ENCODE measurements at regions of chr11 and their contacts with region 1.

Region 1: GRCh38 chr11:62787005-62787759 is at the start of gene TMEM179B:
- DNase-seq: peak; percentile 88
- ATAC-seq: peak; percentile 80
- H3K4me3 ChIP-seq: peak within 1 kb of the TSS; percentile 95
- H3K27ac ChIP-seq: peak within 1 kb of the TSS; percentile 64
- H3K4me1 ChIP-seq: peaks cover 7% of the 10 kb centered on the region
- H3K27me3 ChIP-seq: no peaks in the 10 kb centered on the region
- CTCF ChIP-seq: peak; percentile 65 to 75 (median 74)
- EP300 ChIP-seq: no peak
- POLR2A ChIP-seq: peak; percentile 99
- RAD21 ChIP-seq: peak; percentile 58
- polyA plus RNA-seq, gene TMEM179B: 57.8 to 62.8 TPM

Region 2: DNA sequence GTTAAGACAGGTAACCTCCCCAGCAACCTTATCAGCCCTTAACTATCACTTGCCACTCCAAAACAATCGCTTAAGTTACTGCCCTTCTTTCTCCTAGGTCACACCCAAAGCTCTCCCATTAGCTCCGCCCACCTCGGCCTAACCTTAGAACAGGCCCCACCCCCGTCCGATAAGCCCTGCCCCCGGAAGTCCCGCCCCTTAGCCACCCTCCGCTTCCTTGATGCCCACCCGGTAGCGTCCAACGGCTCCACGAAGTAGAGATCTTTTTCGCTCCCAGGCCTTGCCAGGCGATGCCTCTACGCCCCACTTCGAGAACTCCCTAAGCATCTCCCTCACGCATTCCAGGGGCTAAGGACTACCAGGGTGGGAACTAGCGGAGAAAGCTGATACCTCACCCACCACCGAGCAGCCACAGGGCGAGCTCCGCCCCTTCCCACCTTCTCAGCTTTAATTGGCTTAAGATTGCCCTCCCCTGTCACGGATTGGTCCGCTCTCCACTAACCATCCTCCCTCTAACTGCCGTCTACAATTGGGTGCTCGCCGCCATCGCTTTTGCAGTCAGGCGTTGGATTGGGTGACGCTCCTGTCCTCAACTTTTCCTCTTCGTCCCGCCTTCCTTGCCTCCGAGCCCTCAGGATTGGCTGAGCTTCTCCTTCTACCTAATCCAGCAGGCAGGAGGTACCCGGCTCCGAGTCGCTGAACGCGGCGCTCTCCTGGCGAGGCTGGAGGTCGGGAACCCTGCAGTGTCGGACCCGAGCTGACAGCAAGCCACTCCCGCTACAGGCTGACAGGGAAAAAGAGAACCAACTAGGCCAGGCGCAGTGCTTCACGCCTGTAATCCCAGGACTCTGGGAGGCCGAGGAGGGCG is 33.2 kb before region 1 on chr11 and contains the start of gene ZBTB3:
- CTCF ChIA-PET with region 1: interaction called, 12 read pairs
- POLR2A ChIA-PET with region 1: interaction called, 21 read pairs
- RAD21 ChIA-PET with region 1: interaction called, 8 read pairs
- SMC1A ChIA-PET with region 1: interaction called, 13 read pairs
- in situ Hi-C with region 1: no loop called
- intact Hi-C with region 1: no loop called
- DNase-seq: peak; percentile 99
- ATAC-seq: peak; percentile 99
- H3K4me3 ChIP-seq: peak within 1 kb of the TSS; percentile 85
- H3K27ac ChIP-seq: peak within 1 kb of the TSS; percentile 92
- H3K4me1 ChIP-seq: peaks cover 6% of the 10 kb centered on the region
- H3K27me3 ChIP-seq: no peaks in the 10 kb centered on the region
- CTCF ChIP-seq: no peak
- EP300 ChIP-seq: no peak
- POLR2A ChIP-seq: peak; percentile 85
- RAD21 ChIP-seq: no peak
- polyA plus RNA-seq, gene ZBTB3: 1.4 to 1.9 TPM

Region 3: GRCh38 chr11:62771144-62772021 is 15.8 kb before region 1 on chr11 and contains the start of gene TAF6L:
- CTCF ChIA-PET with region 1: interaction called, 85 read pairs
- POLR2A ChIA-PET with region 1: interaction called, 19 read pairs
- RAD21 ChIA-PET with region 1: interaction called, 33 read pairs
- SMC1A ChIA-PET with region 1: interaction called, 17 read pairs
- in situ Hi-C with region 1: no loop called
- intact Hi-C with region 1: loop called (anchors 2 kb)
- DNase-seq: peak; percentile 77
- ATAC-seq: peak; percentile 92
- H3K4me3 ChIP-seq: peak within 1 kb of the TSS; percentile 86
- H3K27ac ChIP-seq: peak within 1 kb of the TSS; percentile 82
- H3K4me1 ChIP-seq: peaks cover 17% of the 10 kb centered on the region
- H3K27me3 ChIP-seq: no peaks in the 10 kb centered on the region
- CTCF ChIP-seq: no peak
- EP300 ChIP-seq: 0 out of 4 replicates have a peak, but pooled peaks of 1 of the 2 experiments have one; percentile 6
- POLR2A ChIP-seq: peak; percentile 83
- RAD21 ChIP-seq: no peak
- polyA plus RNA-seq, gene TAF6L: 0.15 to 0.39 TPM

Region 4: GRCh38 chr11:62805076-62805892 is 18.1 kb after region 1 on chr11 and contains the start of gene NXF1:
- CTCF ChIA-PET with region 1: interaction called, 15 read pairs
- POLR2A ChIA-PET with region 1: interaction called, 7 read pairs
- RAD21 ChIA-PET with region 1: interaction called, 5 read pairs
- SMC1A ChIA-PET with region 1: interaction called, 5 read pairs
- in situ Hi-C with region 1: no loop called
- intact Hi-C with region 1: loop called (anchors 2 kb)
- DNase-seq: peak; percentile 80
- ATAC-seq: peak; percentile 89
- H3K4me3 ChIP-seq: peak within 1 kb of the TSS; percentile 85
- H3K27ac ChIP-seq: peak within 1 kb of the TSS; percentile 86
- H3K4me1 ChIP-seq: peaks cover 16% of the 10 kb centered on the region
- H3K27me3 ChIP-seq: no peaks in the 10 kb centered on the region
- CTCF ChIP-seq: peak in 1 of 3 experiments; percentile 26; a peak in 1 of 6 replicates
- EP300 ChIP-seq: 0 out of 4 replicates have a peak, but pooled peaks of 1 of the 2 experiments have one; percentile 22
- POLR2A ChIP-seq: peak; percentile 100
- RAD21 ChIP-seq: no peak
- polyA plus RNA-seq, gene NXF1: 23.4 to 37.5 TPM

Region 5: DNA sequence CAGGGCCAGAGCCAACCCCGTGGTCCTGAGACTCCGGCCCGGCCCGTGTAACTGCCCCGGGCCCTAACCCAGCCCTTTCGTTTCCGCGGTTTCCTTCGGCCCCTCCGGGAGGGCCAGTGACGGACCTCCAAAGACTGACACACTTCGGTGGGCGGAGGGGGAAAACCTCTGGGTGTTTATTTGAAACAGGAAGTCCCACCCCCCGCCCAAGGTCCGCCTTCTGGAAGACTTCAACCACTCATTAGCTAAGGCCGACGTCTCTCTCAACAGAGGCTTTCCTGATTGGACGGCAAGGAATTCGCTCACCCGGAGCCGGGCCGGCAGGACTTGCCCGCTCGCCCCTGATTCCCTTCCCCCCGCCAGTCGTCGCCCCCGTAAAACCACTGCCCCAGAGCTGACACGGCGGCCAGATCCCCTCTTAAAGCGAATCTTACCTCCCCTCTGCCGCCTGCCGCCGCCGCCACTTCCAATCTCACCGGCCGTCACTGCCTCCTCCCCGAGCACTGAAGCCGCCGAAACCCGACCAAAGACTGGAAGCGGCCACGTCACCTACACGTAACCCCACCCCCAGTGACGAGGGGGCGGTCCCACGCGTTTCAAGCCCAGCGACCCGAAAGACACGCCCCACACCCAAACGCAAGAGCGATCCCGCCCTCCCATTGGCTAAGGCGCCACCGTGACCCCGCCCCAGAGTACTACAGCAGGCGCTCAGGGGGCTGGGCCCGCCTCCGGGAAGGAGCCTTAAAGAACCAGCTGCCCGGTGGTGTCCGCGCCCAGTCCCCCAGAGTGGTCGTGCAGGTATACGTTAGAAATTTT is 44.5 kb after region 1 on chr11 and contains the start of gene STX5:
- CTCF ChIA-PET with region 1: interaction called, 31 read pairs
- POLR2A ChIA-PET with region 1: interaction called, 13 read pairs
- RAD21 ChIA-PET with region 1: interaction called, 7 read pairs
- SMC1A ChIA-PET with region 1: interaction called, 5 read pairs
- in situ Hi-C with region 1: no loop called
- intact Hi-C with region 1: no loop called
- DNase-seq: peak; percentile 93
- ATAC-seq: peak; percentile 93
- H3K4me3 ChIP-seq: peak within 1 kb of the TSS; percentile 99
- H3K27ac ChIP-seq: peak within 1 kb of the TSS; percentile 84
- H3K4me1 ChIP-seq: peaks cover 8% of the 10 kb centered on the region
- H3K27me3 ChIP-seq: no peaks in the 10 kb centered on the region
- CTCF ChIP-seq: no peak
- EP300 ChIP-seq: 0 out of 4 replicates have a peak, but pooled peaks of 1 of the 2 experiments have one; percentile 16
- POLR2A ChIP-seq: peak; percentile 88
- RAD21 ChIP-seq: no peak
- polyA plus RNA-seq, gene STX5: 3.8 to 4.5 TPM

Region 6: DNA sequence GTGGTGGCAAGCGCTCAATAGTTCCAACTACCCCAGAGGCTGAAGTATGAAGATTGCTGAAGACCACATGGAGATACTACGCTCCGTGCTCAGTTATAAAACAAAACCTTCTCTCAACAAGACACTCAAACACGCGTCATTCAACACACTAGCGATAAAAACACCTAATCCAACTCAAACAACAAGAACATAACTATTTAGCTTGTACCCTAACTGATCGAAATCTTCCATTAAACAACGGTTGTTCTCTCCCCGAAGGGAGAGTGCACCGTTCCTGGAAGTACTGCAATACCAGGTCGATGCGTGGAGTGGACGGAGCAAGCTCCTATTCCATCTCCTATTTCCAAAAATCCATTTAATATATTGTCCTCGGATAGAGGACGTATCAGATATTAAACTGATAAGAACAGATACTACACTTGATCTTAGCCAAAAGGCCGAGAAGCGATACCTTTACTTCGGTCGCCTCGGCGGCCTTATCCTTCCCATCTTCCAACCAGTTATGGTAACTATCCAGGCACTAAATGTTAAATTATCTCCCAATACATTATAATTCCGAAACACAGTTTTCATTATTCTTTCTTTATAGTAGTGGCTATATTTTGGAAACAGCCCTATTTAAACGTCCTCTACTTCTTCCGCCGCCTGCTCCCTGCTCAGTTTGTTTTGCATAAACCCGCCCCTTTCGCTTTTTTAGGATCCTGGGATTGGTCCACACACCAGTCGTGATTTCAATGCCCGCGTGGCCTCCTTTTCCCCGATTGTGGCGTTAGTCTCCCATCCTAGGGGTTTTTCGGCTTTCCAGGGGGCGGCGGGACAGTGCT is 54.4 kb after region 1 on chr11:
- CTCF ChIA-PET with region 1: interaction called, 28 read pairs
- POLR2A ChIA-PET with region 1: interaction called, 10 read pairs
- RAD21 ChIA-PET with region 1: interaction called, 13 read pairs
- SMC1A ChIA-PET with region 1: interaction called, 12 read pairs
- in situ Hi-C with region 1: no loop called
- intact Hi-C with region 1: loop called (anchors 1 kb)
- DNase-seq: peak; percentile 100
- ATAC-seq: peak; percentile 83
- H3K4me3 ChIP-seq: peak overlapping the region; percentile 68; the same call in 1 of the 2 replicates
- H3K27ac ChIP-seq: peak overlapping the region; percentile 99
- H3K4me1 ChIP-seq: peaks cover 7% of the 10 kb centered on the region
- H3K27me3 ChIP-seq: no peaks in the 10 kb centered on the region
- CTCF ChIP-seq: peak in 1 of 3 experiments; percentile 21; a peak in 1 of 6 replicates
- EP300 ChIP-seq: peak in 1 of 2 experiments; percentile 72; a peak in 1 of 4 replicates
- POLR2A ChIP-seq: peak; percentile 92
- RAD21 ChIP-seq: no peak

Region 7: DNA sequence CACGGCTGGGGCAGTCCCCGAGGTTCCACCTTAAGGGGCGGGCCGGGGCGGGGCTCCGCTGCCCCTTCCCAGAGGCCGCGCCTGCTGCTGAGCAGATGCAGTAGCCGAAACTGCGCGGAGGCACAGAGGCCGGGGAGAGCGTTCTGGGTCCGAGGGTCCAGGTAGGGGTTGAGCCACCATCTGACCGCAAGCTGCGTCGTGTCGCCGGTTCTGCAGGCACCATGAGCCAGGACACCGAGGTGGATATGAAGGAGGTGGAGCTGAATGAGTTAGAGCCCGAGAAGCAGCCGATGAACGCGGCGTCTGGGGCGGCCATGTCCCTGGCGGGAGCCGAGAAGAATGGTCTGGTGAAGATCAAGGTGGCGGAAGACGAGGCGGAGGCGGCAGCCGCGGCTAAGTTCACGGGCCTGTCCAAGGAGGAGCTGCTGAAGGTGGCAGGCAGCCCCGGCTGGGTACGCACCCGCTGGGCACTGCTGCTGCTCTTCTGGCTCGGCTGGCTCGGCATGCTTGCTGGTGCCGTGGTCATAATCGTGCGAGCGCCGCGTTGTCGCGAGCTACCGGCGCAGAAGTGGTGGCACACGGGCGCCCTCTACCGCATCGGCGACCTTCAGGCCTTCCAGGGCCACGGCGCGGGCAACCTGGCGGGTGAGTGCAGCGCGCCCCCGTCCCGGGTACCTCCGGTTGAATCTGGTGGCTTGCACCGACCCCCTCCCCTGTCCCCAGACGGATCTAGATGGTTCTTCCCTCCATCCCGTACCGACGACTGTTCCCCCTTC is 93.8 kb after region 1 on chr11 and contains the start of gene SLC3A2:
- CTCF ChIA-PET with region 1: interaction called, 32 read pairs
- POLR2A ChIA-PET with region 1: interaction called, 24 read pairs
- RAD21 ChIA-PET with region 1: interaction called, 18 read pairs
- SMC1A ChIA-PET with region 1: interaction called, 9 read pairs
- in situ Hi-C with region 1: no loop called
- intact Hi-C with region 1: loop called (anchors 5 kb)
- DNase-seq: peak; percentile 47
- ATAC-seq: peak; percentile 92
- H3K4me3 ChIP-seq: peak within 1 kb of the TSS; percentile 91
- H3K27ac ChIP-seq: peak within 1 kb of the TSS; percentile 95
- H3K4me1 ChIP-seq: peaks cover 15% of the 10 kb centered on the region
- H3K27me3 ChIP-seq: no peaks in the 10 kb centered on the region
- CTCF ChIP-seq: peak; percentile 64 to 86 (median 83)
- EP300 ChIP-seq: peak in 1 of 2 experiments; percentile 17; a peak in 1 of 4 replicates
- POLR2A ChIP-seq: peak; percentile 94
- RAD21 ChIP-seq: peak; percentile 58
- polyA plus RNA-seq, gene SLC3A2: 6.9 to 17.0 TPM

Region 8: GRCh38 chr11:62914416-62914815 is 127.2 kb after region 1 on chr11:
- CTCF ChIA-PET with region 1: no interaction called
- POLR2A ChIA-PET with region 1: no interaction called
- RAD21 ChIA-PET with region 1: no interaction called
- SMC1A ChIA-PET with region 1: no interaction called
- in situ Hi-C with region 1: no loop called
- intact Hi-C with region 1: no loop called
- DNase-seq: no peak
- ATAC-seq: no peak
- H3K4me3 ChIP-seq: no peak overlapping the region
- H3K27ac ChIP-seq: no peak overlapping the region
- H3K4me1 ChIP-seq: no peaks in the 10 kb centered on the region
- H3K27me3 ChIP-seq: no peaks in the 10 kb centered on the region; a peak in 2 of 4 replicates
- CTCF ChIP-seq: no peak
- EP300 ChIP-seq: no peak
- POLR2A ChIP-seq: no peak
- RAD21 ChIP-seq: no peak

Region 9: DNA sequence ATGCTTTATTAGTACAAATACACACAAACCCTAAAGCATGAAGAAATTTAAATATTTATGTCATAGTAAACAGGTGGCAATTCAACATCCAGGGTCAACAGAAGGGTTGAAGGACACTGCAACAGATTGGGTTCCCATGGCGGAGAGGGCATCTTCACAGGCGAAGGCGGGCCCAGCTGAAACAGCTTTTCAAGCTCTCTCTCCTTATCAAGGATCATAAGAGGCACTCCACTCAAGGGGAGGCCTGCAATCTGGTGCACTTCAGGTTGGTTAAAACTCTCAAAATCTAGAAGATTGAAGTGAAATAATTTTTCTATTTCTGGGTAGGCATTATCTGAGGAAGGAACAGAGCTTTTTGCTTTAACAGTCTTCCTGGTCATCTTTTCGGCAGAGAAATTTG is 245.3 kb after region 1 on chr11:
- CTCF ChIA-PET with region 1: no interaction called
- POLR2A ChIA-PET with region 1: no interaction called
- RAD21 ChIA-PET with region 1: no interaction called
- SMC1A ChIA-PET with region 1: no interaction called
- in situ Hi-C with region 1: no loop called
- intact Hi-C with region 1: no loop called
- DNase-seq: no peak
- ATAC-seq: no peak
- H3K4me3 ChIP-seq: no peak overlapping the region
- H3K27ac ChIP-seq: no peak overlapping the region
- H3K4me1 ChIP-seq: no peaks in the 10 kb centered on the region
- H3K27me3 ChIP-seq: no peaks in the 10 kb centered on the region
- CTCF ChIP-seq: no peak
- EP300 ChIP-seq: no peak
- POLR2A ChIP-seq: no peak
- RAD21 ChIP-seq: no peak

Measured in GM12878 (cell line).